PC-9 (cell line): ENCODE measurements at regions of chr3 and their contacts with region 1.

Region 1: GRCh38 chr3:1531981-1532380 is 439.2 kb downstream of the CNTN6 start:
- DNase-seq: no peak
- H3K4me3 ChIP-seq: no peak overlapping the region
- H3K27ac ChIP-seq: no peak overlapping the region
- H3K4me1 ChIP-seq: no peaks in the 10 kb centered on the region
- H3K27me3 ChIP-seq: no peaks in the 10 kb centered on the region
- CTCF ChIP-seq: no peak

Region 2: DNA sequence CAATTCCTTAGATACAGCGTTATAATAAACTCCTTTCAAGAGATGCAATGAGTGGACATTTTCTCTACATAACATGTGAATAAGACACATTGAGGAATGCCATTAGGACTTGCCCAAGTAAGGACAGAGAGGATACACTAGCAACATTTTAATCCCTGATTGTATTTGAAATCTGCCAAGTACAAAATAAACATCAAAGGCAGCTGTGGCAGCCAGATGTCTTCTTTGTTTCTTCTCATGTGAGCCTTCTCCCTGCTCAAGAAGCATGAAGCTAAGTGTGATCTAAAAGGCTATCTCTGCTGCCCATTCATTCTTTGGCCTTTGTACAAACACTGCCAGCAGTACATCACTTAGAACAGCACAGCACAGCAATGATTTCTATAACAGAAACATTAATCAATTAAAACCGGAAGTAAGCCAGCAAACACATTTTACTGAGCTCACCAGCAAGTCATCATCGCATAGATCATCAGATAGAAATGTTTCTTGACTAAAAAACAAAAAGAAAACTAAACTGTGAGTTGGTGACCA is 75.1 kb before region 1 on chr3:
- CTCF ChIA-PET with region 1: no interaction called
- POLR2A ChIA-PET with region 1: no interaction called
- intact Hi-C with region 1: no loop called
- DNase-seq: no peak
- H3K4me3 ChIP-seq: no peak overlapping the region
- H3K27ac ChIP-seq: no peak overlapping the region
- H3K4me1 ChIP-seq: no peaks in the 10 kb centered on the region
- H3K27me3 ChIP-seq: no peaks in the 10 kb centered on the region
- CTCF ChIP-seq: no peak

Region 3: GRCh38 chr3:1499694-1500093 is 32.3 kb before region 1 on chr3:
- CTCF ChIA-PET with region 1: no interaction called
- POLR2A ChIA-PET with region 1: no interaction called
- intact Hi-C with region 1: loop called (anchors 2 kb)
- DNase-seq: no peak
- H3K4me3 ChIP-seq: no peak overlapping the region
- H3K27ac ChIP-seq: no peak overlapping the region
- H3K4me1 ChIP-seq: no peaks in the 10 kb centered on the region
- H3K27me3 ChIP-seq: no peaks in the 10 kb centered on the region
- CTCF ChIP-seq: no peak

Region 4: DNA sequence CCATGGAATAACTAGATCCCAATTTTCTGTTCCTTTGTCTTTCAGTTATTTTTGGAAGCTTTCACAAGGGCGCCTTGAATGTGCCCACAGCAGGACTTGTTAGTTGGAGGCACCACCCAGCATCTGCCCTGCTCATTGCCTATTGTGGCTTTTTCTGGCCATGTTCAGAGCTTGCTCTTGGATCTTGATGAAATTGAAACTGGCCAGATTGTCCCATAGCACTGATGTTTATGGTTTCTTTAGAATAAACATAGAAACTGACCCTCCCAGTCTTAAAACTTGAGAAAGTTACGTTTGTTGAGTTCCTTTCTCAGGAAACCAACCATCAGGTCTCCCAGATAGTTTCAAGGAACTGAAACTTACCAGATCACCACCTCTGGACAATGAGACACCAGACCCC is 1103.5 kb after region 1 on chr3:
- CTCF ChIA-PET with region 1: no interaction called
- POLR2A ChIA-PET with region 1: no interaction called
- intact Hi-C with region 1: no loop called
- DNase-seq: no peak
- H3K4me3 ChIP-seq: no peak overlapping the region
- H3K27ac ChIP-seq: no peak overlapping the region
- H3K4me1 ChIP-seq: no peaks in the 10 kb centered on the region
- H3K27me3 ChIP-seq: no peaks in the 10 kb centered on the region
- CTCF ChIP-seq: no peak